Lower lobe of right lung (tissue), 2 donors: ENCODE measurements at regions of chr6 and their contacts with region 1.

Region 1: DNA sequence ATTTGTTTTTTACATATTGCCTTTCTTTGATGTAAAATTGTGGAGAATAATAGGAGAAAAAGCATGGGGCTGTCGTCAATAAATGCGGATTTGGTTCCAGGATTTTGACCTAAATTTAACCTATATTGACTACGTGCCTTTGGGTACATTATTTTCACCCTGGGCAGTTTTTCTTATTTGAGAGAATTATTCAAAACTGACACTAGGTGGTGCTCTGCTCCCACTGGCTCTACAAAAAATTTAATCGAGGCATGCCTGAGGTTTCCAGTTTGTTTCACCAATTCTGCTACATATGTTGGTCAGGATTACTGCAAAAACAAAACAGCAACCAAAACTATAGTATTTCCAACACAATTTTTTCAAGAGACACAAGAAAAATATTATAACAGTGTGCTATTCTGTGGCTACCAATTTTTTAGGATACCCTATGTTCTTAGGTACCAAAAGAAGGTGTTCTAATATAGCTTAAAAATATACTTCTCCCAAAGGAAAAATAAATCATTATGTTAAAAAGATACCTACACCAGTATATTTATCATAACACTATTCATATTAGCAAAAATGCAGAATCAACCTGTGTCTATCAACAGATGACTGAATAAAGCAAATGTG is 48.6 kb upstream of the FABP7 start:
- DNase-seq: no peak
- ATAC-seq: peak; percentile 66 to 68
- H3K4me3 ChIP-seq: no peak overlapping the region
- H3K27ac ChIP-seq: no peak overlapping the region
- H3K4me1 ChIP-seq: no peaks in the 10 kb centered on the region
- H3K27me3 ChIP-seq: no peaks in the 10 kb centered on the region
- CTCF ChIP-seq: peak; percentile 73

Region 2: GRCh38 chr6:122839477-122839876 is 108.6 kb after region 1 on chr6:
- intact Hi-C with region 1: loop called (anchors 10 kb)
- DNase-seq: no peak
- ATAC-seq: peak; percentile 75 to 83
- H3K4me3 ChIP-seq: no peak overlapping the region
- H3K27ac ChIP-seq: no peak overlapping the region
- H3K4me1 ChIP-seq: no peaks in the 10 kb centered on the region
- H3K27me3 ChIP-seq: no peaks in the 10 kb centered on the region
- CTCF ChIP-seq: peak; percentile 60